Activated CD4-positive, alpha-beta memory T cell treated with anti-CD3 and anti-CD28 coated beads for 36 hours (primary cell): ENCODE measurements at regions of chr3 and their contacts with region 1.

Region 1: GRCh38 chr3:126982471-126983175 is at the start of gene PLXNA1:
- DNase-seq: peak; percentile 88
- H3K4me3 Mint-ChIP-seq: peak within 1 kb of the TSS; percentile 79
- H3K27ac Mint-ChIP-seq: peak within 1 kb of the TSS; percentile 88
- H3K4me1 Mint-ChIP-seq: peaks cover 14% of the 10 kb centered on the region
- H3K27me3 Mint-ChIP-seq: peaks cover 7% of the 10 kb centered on the region
- total RNA-seq, gene PLXNA1: 8.8 to 9.3 TPM

Region 2: DNA sequence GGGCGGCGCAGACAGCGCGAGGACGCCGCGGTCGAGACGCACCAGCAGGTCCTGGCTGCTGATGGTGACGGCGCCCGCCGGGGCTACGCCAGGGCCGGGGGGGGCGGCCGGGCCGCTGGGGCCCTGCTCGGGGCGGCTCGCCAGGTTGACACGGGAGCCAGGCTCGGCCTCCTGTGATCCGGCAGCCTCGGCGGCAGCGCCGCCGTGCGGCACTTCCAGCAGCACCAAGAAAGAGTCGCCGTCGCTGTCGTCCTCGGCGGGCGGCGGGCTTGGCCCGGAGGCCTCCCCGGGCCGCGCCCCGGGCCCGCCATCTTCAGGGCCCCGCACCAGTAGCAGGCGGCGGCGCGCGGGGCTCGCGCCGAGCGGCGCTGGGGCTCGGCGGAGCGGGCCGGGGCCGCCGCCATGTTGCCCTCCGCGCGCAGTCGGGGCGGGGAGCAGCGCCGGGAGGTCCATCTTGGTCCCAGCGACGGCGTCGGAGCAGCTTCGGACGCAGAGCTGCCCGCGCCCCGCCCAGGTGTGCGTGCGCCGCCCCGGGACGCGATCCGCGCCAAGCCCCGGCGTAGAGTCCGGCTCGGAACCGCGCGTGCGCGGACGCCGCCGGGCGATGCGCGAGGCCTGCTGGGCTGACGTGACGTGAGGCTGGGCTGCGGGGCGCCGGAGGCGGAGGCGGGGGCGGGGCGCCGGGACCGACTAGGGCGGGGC is 507.1 kb before region 1 on chr3 and contains the start of gene ZXDC:
- CTCF ChIA-PET with region 1: no interaction called
- POLR2A ChIA-PET with region 1: no interaction called
- intact Hi-C with region 1: loop called (anchors 2 kb)
- DNase-seq: peak; percentile 94
- H3K4me3 Mint-ChIP-seq: peak within 1 kb of the TSS; percentile 88
- H3K27ac Mint-ChIP-seq: peak within 1 kb of the TSS; percentile 79
- H3K4me1 Mint-ChIP-seq: peaks cover 39% of the 10 kb centered on the region
- H3K27me3 Mint-ChIP-seq: no peaks in the 10 kb centered on the region
- total RNA-seq, gene ZXDC: 18.2 to 19.1 TPM

Region 3: DNA sequence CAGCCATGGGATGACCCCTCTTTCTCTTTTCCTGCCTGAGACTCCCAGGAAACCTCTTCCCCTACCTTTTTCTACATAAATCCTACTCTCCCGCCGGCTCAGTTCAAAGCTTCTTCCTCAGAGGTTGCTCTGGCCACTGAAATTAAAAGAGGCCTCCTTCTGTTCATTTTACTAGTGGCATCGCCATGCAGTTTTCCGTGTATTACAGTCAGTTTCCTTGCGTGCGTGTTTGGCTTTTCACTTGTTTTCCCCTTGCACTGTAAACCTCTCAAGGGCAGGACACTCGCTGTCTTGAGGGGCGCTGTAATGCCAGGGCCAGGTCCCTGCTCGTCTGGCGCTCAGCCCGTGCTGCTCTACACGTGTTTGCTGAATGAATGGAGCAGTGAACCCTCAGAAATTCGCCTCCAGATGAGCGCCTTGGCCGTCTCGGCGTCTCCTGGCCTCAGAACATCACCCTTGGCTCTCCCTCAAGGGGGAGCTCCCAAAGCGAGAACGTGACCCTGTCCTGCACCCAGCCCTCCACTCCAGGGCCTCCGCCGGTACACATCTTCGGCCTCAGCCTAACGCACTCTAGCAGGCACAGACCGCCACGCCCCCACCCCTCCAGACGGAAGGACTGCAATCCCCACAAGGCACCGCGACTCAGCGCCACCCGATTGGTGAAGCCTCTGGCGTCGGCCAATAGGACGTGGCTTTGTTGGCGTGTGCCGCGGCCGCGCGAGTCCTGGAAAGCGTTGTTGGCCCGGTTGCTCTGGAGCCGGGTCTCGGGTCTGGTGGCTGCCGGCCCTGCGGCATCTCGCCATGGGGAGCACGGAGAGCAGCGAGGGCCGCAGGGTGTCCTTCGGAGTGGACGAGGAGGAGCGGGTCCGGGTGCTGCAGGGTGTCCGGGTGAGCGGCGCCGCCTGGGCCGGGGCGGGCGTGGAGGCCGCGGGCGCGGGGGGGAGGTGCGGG is 278.8 kb before region 1 on chr3 and contains the start of gene CHCHD6:
- CTCF ChIA-PET with region 1: no interaction called
- POLR2A ChIA-PET with region 1: interaction called, 9 read pairs
- intact Hi-C with region 1: loop called (anchors 2 kb)
- DNase-seq: peak; percentile 96
- H3K4me3 Mint-ChIP-seq: peak within 1 kb of the TSS; percentile 97
- H3K27ac Mint-ChIP-seq: peak within 1 kb of the TSS; percentile 72
- H3K4me1 Mint-ChIP-seq: peaks cover 21% of the 10 kb centered on the region
- H3K27me3 Mint-ChIP-seq: peaks cover 22% of the 10 kb centered on the region
- total RNA-seq, gene CHCHD6: 12.7 to 13.1 TPM

Region 4: GRCh38 chr3:126911162-126912026 is 71.2 kb before region 1 on chr3:
- CTCF ChIA-PET with region 1: interaction called, 6 read pairs
- POLR2A ChIA-PET with region 1: no interaction called
- intact Hi-C with region 1: loop called (anchors 1 kb)
- DNase-seq: peak; percentile 87
- H3K4me3 Mint-ChIP-seq: no peak overlapping the region
- H3K27ac Mint-ChIP-seq: peak overlapping the region; percentile 88
- H3K4me1 Mint-ChIP-seq: peaks cover 32% of the 10 kb centered on the region
- H3K27me3 Mint-ChIP-seq: no peaks in the 10 kb centered on the region

Region 5: GRCh38 chr3:127544192-127544802 is 561.7 kb after region 1 on chr3:
- CTCF ChIA-PET with region 1: interaction called, 9 read pairs
- POLR2A ChIA-PET with region 1: no interaction called
- intact Hi-C with region 1: loop called (anchors 2 kb)
- DNase-seq: peak; percentile 77
- H3K4me3 Mint-ChIP-seq: no peak overlapping the region
- H3K27ac Mint-ChIP-seq: no peak overlapping the region
- H3K4me1 Mint-ChIP-seq: peaks cover 11% of the 10 kb centered on the region
- H3K27me3 Mint-ChIP-seq: peaks cover 3% of the 10 kb centered on the region